A549 (cell line): ENCODE measurements at regions of chr19 and their contacts with region 1.

Region 1: GRCh38 chr19:40640744-40641143 is 39.6 kb downstream of the LTBP4 start:
- DNase-seq: peak in 1 of 2 experiments; percentile 70
- ATAC-seq: peak; percentile 53 to 64
- H3K4me3 ChIP-seq: no peak overlapping the region
- H3K27ac ChIP-seq: peak overlapping the region; percentile 72 to 84
- H3K4me1 ChIP-seq: peaks cover 34% of the 10 kb centered on the region
- CTCF ChIP-seq: no peak
- EP300 ChIP-seq: no peak
- POLR2A ChIP-seq: no peak
- RAD21 ChIP-seq: no peak

Region 2: GRCh38 chr19:40529093-40529954 is 111.4 kb before region 1 on chr19:
- CTCF ChIA-PET with region 1: interaction called, 30 read pairs
- POLR2A ChIA-PET with region 1: no interaction called
- DNase-seq: peak; percentile 94 to 100
- ATAC-seq: peak; percentile 37 to 78
- H3K4me3 ChIP-seq: peak overlapping the region; percentile 50
- H3K27ac ChIP-seq: peak overlapping the region; percentile 55 to 79
- H3K4me1 ChIP-seq: peaks cover 18% of the 10 kb centered on the region
- CTCF ChIP-seq: peak; percentile 99
- EP300 ChIP-seq: 0 out of 5 replicates have a peak, but pooled peaks of 1 of the 2 experiments have one; percentile 17
- POLR2A ChIP-seq: no peak
- RAD21 ChIP-seq: peak; percentile 43 to 72; a peak in 4 of 5 replicates

Region 3: GRCh38 chr19:40561947-40562346 is 78.8 kb before region 1 on chr19:
- CTCF ChIA-PET with region 1: interaction called, 14 read pairs
- POLR2A ChIA-PET with region 1: no interaction called
- DNase-seq: no peak
- ATAC-seq: no peak
- H3K4me3 ChIP-seq: no peak overlapping the region
- H3K27ac ChIP-seq: no peak overlapping the region
- H3K4me1 ChIP-seq: no peaks in the 10 kb centered on the region
- CTCF ChIP-seq: no peak
- EP300 ChIP-seq: no peak
- POLR2A ChIP-seq: no peak
- RAD21 ChIP-seq: no peak

Region 4: GRCh38 chr19:40585241-40585982 is 55.3 kb before region 1 on chr19:
- CTCF ChIA-PET with region 1: interaction called, 31 read pairs
- POLR2A ChIA-PET with region 1: no interaction called
- DNase-seq: peak; percentile 69 to 97
- ATAC-seq: peak; percentile 60 to 74
- H3K4me3 ChIP-seq: no peak overlapping the region
- H3K27ac ChIP-seq: peak overlapping the region; percentile 70 to 84
- H3K4me1 ChIP-seq: peaks cover 47% of the 10 kb centered on the region
- CTCF ChIP-seq: no peak
- EP300 ChIP-seq: peak; percentile 65 to 68; a peak in 3 of 5 replicates
- POLR2A ChIP-seq: no peak
- RAD21 ChIP-seq: peak in 1 of 2 experiments; percentile 21; a peak in 1 of 5 replicates

Region 5: GRCh38 chr19:40613640-40614303 is 27.0 kb before region 1 on chr19:
- CTCF ChIA-PET with region 1: interaction called, 423 read pairs
- POLR2A ChIA-PET with region 1: no interaction called
- DNase-seq: peak; percentile 72 to 92
- ATAC-seq: peak; percentile 54 to 76
- H3K4me3 ChIP-seq: peak overlapping the region; percentile 44
- H3K27ac ChIP-seq: peak overlapping the region; percentile 60 to 74
- H3K4me1 ChIP-seq: peaks cover 16% of the 10 kb centered on the region; the same call in 2 of the 3 replicates
- CTCF ChIP-seq: no peak
- EP300 ChIP-seq: no peak
- POLR2A ChIP-seq: no peak
- RAD21 ChIP-seq: no peak

Region 6: GRCh38 chr19:40671404-40671803 is 30.7 kb after region 1 on chr19:
- CTCF ChIA-PET with region 1: no interaction called
- POLR2A ChIA-PET with region 1: no interaction called
- DNase-seq: no peak
- ATAC-seq: no peak
- H3K4me3 ChIP-seq: no peak overlapping the region
- H3K27ac ChIP-seq: no peak overlapping the region
- H3K4me1 ChIP-seq: peaks cover 8% of the 10 kb centered on the region
- CTCF ChIP-seq: no peak
- EP300 ChIP-seq: no peak
- POLR2A ChIP-seq: 0 out of 2 replicates have a peak, but pooled peaks have one; percentile 11
- RAD21 ChIP-seq: no peak

Region 7: GRCh38 chr19:40682431-40682964 is 41.8 kb after region 1 on chr19:
- CTCF ChIA-PET with region 1: no interaction called
- POLR2A ChIA-PET with region 1: no interaction called
- DNase-seq: no peak
- ATAC-seq: no peak
- H3K4me3 ChIP-seq: no peak overlapping the region
- H3K27ac ChIP-seq: no peak overlapping the region
- H3K4me1 ChIP-seq: peaks cover 2% of the 10 kb centered on the region; the same call in 1 of the 3 replicates
- CTCF ChIP-seq: no peak
- EP300 ChIP-seq: no peak
- POLR2A ChIP-seq: no peak
- RAD21 ChIP-seq: no peak